ENCODE measurements at regions of chr7 and their contacts with region 1.

Region 1: GRCh38 chr7:95690367-95690947 is 81.9 kb upstream of the DYNC1I1 start:
- DNase-seq: no peak
- ATAC-seq: peak; percentile 32 to 59
- H3K4me3 ChIP-seq: peak overlapping the region; percentile 32
- H3K27ac ChIP-seq: no peak overlapping the region
- H3K4me1 ChIP-seq: no peaks in the 10 kb centered on the region
- H3K27me3 ChIP-seq: no peaks in the 10 kb centered on the region

Region 2: DNA sequence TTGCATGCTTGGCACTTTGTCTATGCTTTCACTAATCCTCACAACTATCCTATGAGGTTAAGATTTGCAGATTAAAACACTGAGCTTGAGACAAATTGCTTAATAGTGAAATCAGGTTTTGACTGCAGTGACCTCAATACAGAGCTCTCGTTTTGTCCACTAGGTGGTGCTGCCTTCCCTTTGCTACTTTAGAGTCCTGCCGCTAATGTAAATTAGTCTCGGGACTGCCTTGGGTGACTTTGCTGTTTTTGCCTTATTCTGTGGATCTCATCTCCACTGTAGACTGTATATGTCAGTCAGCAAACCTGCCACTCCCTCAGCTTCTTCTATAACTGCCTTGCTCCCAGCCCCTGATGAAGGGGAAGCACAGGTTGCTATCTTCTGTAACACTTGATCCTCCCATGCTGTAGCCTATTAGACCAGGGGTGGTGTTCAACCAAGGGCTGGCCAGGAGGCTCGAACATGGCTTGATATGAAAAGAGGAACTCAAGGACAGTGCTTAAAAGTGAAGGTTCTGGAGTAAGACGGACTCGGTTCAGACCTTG is 178.7 kb before region 1 on chr7:
- intact Hi-C with region 1: loop called (anchors 2 to 5 kb)
- DNase-seq: peak; percentile 48 to 71 (median 57)
- ATAC-seq: peak; percentile 89 to 92
- H3K4me3 ChIP-seq: no peak overlapping the region
- H3K27ac ChIP-seq: no peak overlapping the region
- H3K4me1 ChIP-seq: no peaks in the 10 kb centered on the region
- H3K27me3 ChIP-seq: no peaks in the 10 kb centered on the region

Region 3: GRCh38 chr7:95527033-95527775 is 163.3 kb before region 1 on chr7:
- intact Hi-C with region 1: loop called in 3 of 4 experiments (anchors 5 kb)
- DNase-seq: peak; percentile 42 to 65 (median 57)
- ATAC-seq: peak; percentile 88 to 91
- H3K4me3 ChIP-seq: no peak overlapping the region
- H3K27ac ChIP-seq: no peak overlapping the region
- H3K4me1 ChIP-seq: peaks cover 3% of the 10 kb centered on the region
- H3K27me3 ChIP-seq: no peaks in the 10 kb centered on the region

Region 4: DNA sequence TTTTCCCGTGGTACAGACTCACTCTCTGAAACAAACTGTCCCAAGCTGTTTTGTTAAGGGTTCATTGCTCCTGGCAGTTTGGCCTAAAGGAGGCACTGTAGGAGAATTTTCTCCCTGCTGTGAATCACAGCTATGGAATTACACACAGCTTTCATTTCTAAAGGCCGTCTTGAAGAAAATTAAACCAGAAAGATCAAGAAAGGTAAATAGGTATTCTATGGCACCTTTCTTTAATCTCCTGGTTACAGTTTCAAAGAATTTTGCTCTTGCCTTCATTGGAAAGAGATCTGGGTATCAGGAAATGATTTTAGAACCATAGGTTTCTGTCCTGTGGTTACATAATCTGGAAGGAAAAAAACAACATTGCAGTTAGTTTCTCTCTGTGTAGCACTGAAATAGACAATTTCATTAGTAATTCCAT is 145.4 kb before region 1 on chr7:
- intact Hi-C with region 1: loop called in 1 of 4 experiments (anchors 5 kb)
- DNase-seq: no peak
- ATAC-seq: peak; percentile 82 to 90
- H3K4me3 ChIP-seq: peak overlapping the region; percentile 88
- H3K27ac ChIP-seq: no peak overlapping the region
- H3K4me1 ChIP-seq: peaks cover 4% of the 10 kb centered on the region
- H3K27me3 ChIP-seq: no peaks in the 10 kb centered on the region

Region 5: DNA sequence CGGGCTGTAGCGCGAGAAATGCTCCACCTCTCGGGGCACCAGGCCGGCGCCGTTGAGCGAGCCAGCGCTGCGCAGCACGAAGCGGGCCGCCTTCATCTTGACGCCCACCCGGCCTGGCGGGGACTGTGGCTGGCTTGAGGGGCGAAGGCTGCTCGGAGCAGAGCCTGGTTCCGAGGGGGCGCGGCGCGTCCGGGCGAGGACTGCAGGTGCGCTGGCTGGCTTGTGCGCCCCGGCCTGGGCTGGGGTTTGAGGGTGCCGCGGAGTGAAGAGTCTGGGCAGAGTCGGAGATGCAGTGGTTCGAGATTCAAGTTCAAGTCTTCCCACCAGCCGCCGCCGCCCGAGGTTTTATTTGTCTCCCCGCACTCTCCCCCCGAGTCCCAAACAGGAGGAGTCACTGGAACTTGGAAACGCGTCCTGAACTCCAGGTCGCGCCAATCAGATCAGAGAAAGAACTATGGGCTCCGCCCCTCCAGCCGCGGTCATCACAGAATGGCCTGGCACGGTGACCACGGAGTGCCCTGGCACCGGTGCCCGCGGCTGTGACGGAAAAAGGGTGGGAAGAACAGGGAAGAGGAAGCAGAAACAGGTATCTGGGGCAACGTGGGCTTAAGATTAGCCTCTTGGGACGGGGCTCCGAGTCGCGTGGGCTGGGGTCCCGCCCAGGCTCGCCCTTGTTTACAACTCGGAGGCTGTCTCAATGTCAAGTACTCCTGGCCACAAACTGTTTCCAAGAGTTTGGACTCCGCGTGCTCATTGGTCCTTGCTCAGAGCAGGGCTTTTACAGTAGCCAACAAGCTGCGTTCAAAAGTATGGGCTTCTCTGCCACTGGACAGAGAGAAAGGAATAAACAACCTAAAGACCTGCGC is 94.0 kb before region 1 on chr7 and contains the start of gene PDK4:
- intact Hi-C with region 1: loop called in 2 of 4 experiments (anchors 10 kb)
- DNase-seq: peak; percentile 97 to 99 (median 97)
- ATAC-seq: peak; percentile 95 to 98
- H3K4me3 ChIP-seq: peak within 1 kb of the TSS; percentile 66
- H3K27ac ChIP-seq: peak within 1 kb of the TSS; percentile 87
- H3K4me1 ChIP-seq: no peaks in the 10 kb centered on the region
- H3K27me3 ChIP-seq: no peaks in the 10 kb centered on the region
- total RNA-seq, gene PDK4: 53.0 to 842 (median 103) TPM

Region 6: GRCh38 chr7:95628831-95629439 is 61.5 kb before region 1 on chr7:
- intact Hi-C with region 1: no loop called
- DNase-seq: no peak
- ATAC-seq: peak; percentile 90 to 93
- H3K4me3 ChIP-seq: no peak overlapping the region
- H3K27ac ChIP-seq: peak overlapping the region; percentile 94
- H3K4me1 ChIP-seq: peaks cover 10% of the 10 kb centered on the region
- H3K27me3 ChIP-seq: no peaks in the 10 kb centered on the region

Measured in right cardiac atrium (tissue), 5 donors.